AG04449 (cell line): ENCODE measurements at regions of chr3 and their contacts with region 1.

Region 1: DNA sequence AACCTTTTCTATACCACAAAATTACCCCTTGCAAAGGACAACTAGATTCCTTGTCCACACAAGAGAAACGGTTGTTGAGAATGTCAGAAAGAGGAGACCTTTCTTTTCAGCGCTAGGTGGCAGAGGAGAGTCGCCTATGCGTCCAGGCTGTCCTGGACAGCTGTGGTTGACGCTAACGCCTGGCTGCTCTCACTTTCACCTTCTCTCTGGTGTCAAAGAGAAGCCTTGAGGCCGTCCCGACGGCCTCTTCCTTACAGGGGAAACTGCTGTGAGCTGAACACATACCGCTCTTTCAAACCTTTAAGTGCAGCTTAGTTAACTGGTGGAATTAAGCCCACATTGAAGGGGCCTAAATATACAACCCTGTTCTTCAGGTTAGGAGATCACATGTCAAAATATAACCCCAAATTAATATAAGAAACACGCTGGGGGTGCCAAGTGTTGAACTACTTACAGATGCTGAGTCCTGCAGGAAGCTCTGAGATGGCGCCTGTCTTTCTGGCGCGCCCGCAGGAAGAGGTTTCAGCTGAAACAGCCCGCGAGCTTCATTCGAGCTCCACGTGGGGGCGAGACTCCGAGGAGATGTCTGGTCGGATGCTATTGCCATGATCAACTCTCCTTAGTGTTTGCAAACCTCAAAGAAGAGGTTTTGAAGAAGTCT is 26.1 kb upstream of the KBTBD8 start:
- DNase-seq: peak; percentile 5
- H3K4me3 ChIP-seq: peak overlapping the region; percentile 51
- CTCF ChIP-seq: peak; percentile 91

Region 2: GRCh38 chr3:66253790-66254620 is 718.0 kb before region 1 on chr3:
- CTCF ChIA-PET with region 1: interaction called, 10 read pairs
- POLR2A ChIA-PET with region 1: no interaction called
- DNase-seq: no peak
- H3K4me3 ChIP-seq: no peak overlapping the region
- CTCF ChIP-seq: peak; percentile 43

Region 3: GRCh38 chr3:66948041-66948440 is 24.0 kb before region 1 on chr3:
- CTCF ChIA-PET with region 1: interaction called, 10 read pairs
- POLR2A ChIA-PET with region 1: no interaction called
- DNase-seq: no peak
- H3K4me3 ChIP-seq: no peak overlapping the region
- CTCF ChIP-seq: no peak

Region 4: GRCh38 chr3:66983101-66983500 is 11.1 kb after region 1 on chr3:
- CTCF ChIA-PET with region 1: interaction called, 51 read pairs
- POLR2A ChIA-PET with region 1: no interaction called
- DNase-seq: no peak
- H3K4me3 ChIP-seq: no peak overlapping the region
- CTCF ChIP-seq: no peak

Region 5: DNA sequence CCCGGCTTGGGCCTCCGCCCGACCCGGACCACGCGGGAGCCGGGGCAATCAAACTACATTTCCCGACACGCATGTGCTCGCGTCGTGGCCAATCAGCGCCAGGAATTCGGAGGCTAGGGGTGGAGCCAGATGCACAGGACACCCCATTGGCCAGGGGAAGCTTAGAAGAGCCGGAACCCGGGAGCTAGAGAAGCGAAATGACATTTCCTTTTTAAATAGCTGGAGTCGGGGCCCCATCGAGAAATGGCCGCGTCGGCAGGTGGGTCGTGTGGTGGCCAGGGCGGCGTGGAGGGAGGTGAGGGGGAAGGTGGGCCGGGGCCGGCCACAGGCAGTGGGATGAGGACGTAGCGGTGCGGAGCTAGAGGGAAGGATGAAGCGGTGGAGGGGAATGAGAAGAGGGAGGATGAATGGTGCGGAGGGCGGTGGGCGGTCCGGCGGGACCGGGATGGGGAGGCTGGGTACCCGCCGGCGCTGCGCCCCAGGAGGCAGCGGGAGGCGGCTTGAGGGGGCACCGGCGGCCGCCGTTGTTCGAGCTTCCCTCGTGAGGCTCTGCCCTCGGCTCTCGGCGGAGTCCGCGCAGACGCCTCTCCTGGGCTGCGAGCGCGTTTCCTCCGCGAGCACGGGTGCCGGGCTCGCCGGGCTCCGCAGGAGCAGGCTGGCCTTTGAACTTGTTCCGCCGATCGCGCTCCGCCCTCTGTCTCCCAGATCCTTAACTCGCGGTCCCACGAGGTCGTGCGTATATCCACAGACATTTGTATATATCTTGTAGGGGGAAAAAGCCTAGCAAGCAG is 26.3 kb after region 1 on chr3 and contains the start of gene KBTBD8:
- CTCF ChIA-PET with region 1: interaction called, 28 read pairs
- POLR2A ChIA-PET with region 1: no interaction called
- DNase-seq: peak; percentile 91
- H3K4me3 ChIP-seq: peak within 1 kb of the TSS; percentile 86
- CTCF ChIP-seq: no peak

Region 6: DNA sequence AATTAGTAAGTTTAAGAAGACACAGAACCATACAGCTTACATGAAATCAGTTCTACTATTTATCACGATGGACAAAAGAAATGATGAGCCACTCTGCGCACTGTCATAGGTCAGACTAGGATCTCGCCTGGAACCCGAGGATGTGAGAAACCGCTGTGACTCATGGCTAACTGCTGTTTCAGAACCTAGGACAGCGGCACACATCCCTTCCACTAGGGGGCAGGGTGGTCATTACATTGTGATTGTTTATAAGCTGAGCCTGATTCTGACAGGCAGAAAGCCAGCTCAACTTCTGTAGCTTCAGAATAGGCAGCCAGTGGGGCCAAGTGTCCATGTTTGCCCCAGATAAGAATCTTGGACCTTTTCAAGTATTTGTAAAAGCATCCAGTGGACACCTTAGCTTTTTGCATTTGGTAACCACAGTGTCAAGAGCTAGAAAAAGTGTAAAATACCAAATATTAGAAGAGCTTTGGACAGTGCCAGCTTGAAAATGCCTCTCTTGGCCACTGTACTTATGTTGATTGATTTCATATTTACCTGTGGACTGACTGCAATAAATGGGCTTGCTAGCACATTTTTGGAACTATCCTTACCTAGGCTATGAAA is 141.9 kb after region 1 on chr3:
- CTCF ChIA-PET with region 1: interaction called, 20 read pairs
- POLR2A ChIA-PET with region 1: no interaction called
- DNase-seq: peak; percentile 23
- H3K4me3 ChIP-seq: no peak overlapping the region
- CTCF ChIP-seq: peak; percentile 99

Region 7: GRCh38 chr3:68893600-68894239 is 1921.7 kb after region 1 on chr3:
- CTCF ChIA-PET with region 1: interaction called, 21 read pairs
- POLR2A ChIA-PET with region 1: no interaction called
- DNase-seq: no peak
- H3K4me3 ChIP-seq: no peak overlapping the region
- CTCF ChIP-seq: peak; percentile 22